ENCODE measurements at regions of chr3 and their contacts with region 1.

Region 1: DNA sequence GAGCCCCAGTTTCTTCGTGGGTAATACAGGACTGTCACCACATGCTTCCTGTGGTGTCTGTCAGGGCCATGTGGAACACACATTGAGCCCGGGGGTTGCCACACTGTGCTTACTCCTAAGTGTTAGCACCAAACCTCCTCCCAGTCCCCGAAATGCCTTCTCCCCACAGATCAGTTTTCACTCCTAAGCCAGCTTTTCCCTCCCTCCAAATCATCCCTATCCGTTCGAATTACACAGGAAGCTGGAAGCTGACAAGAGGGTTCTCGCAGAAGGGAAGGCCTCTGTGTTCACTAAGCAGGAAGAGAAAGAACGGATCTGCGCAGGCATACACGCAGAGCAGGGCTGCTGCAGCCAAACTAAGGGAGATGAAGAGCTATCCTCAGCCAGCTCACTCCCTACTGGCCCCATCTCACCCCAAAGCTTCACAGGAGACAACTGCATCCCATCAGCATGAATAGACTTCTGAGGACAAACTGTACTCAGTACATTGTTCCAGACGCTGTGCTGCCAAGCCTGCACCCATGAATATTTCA is 32.3 kb downstream of the XXYLT1 start:
- DNase-seq: peak in 1 of 3 donors; percentile 0
- H3K4me3 ChIP-seq: no peak overlapping the region
- H3K4me3 Mint-ChIP-seq: no peak overlapping the region
- H3K27ac ChIP-seq: no peak overlapping the region
- H3K27ac Mint-ChIP-seq: no peak overlapping the region
- H3K4me1 ChIP-seq: no peaks in the 10 kb centered on the region
- H3K4me1 Mint-ChIP-seq: no peaks in the 10 kb centered on the region
- H3K27me3 ChIP-seq: no peaks in the 10 kb centered on the region
- H3K27me3 Mint-ChIP-seq: peaks cover 0 to 2% (median 0%) of the 10 kb centered on the region in 3 donors
- CTCF ChIP-seq: no peak

Region 2: DNA sequence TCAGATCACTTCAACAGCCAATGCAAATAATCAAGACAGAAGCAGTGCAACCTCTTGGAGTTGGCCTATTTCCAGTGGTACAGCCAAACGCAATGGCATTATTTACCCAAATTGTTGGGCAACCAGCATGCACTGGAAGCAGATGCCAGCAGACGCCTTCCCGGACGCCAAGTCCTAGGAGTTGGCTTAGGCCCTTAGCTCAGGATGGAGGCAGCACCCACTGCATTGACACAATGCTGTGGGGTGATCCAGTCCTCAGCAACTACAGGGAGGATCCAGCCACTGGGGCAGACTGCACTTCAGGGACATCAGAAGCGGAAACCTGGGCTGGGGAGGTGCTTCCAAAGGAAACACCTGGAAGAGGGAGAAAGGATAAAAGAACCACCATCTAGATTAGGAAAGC is 262.6 kb before region 1 on chr3:
- intact Hi-C with region 1: loop called in 1 of 2 experiments (anchors 10 kb)
- DNase-seq: no peak
- H3K4me3 ChIP-seq: no peak overlapping the region
- H3K4me3 Mint-ChIP-seq: no peak overlapping the region
- H3K27ac ChIP-seq: no peak overlapping the region
- H3K27ac Mint-ChIP-seq: no peak overlapping the region
- H3K4me1 ChIP-seq: peaks cover 11 to 12% of the 10 kb centered on the region in 2 donors
- H3K4me1 Mint-ChIP-seq: peaks cover 21% of the 10 kb centered on the region
- H3K27me3 ChIP-seq: no peaks in the 10 kb centered on the region
- H3K27me3 Mint-ChIP-seq: peaks cover 1 to 4% (median 3%) of the 10 kb centered on the region in 3 donors
- CTCF ChIP-seq: no peak

Region 3: GRCh38 chr3:195226900-195227447 is 11.7 kb before region 1 on chr3:
- intact Hi-C with region 1: no loop called
- DNase-seq: no peak
- H3K4me3 ChIP-seq: no peak overlapping the region
- H3K4me3 Mint-ChIP-seq: no peak overlapping the region
- H3K27ac ChIP-seq: no peak overlapping the region
- H3K27ac Mint-ChIP-seq: no peak overlapping the region
- H3K4me1 ChIP-seq: no peaks in the 10 kb centered on the region
- H3K4me1 Mint-ChIP-seq: peaks cover 13% of the 10 kb centered on the region
- H3K27me3 ChIP-seq: no peaks in the 10 kb centered on the region
- H3K27me3 Mint-ChIP-seq: peaks cover 0 to 4% (median 1%) of the 10 kb centered on the region in 3 donors
- CTCF ChIP-seq: peak; percentile 11